GM12878 (cell line): ENCODE measurements at regions of chr12 and their contacts with region 1.

Region 1: GRCh38 chr12:95532851-95533250 is 18.4 kb downstream of the USP44 start:
- DNase-seq: no peak
- ATAC-seq: no peak
- H3K4me3 ChIP-seq: no peak overlapping the region
- H3K27ac ChIP-seq: no peak overlapping the region
- H3K4me1 ChIP-seq: no peaks in the 10 kb centered on the region
- H3K27me3 ChIP-seq: no peaks in the 10 kb centered on the region; a peak in 1 of 4 replicates
- CTCF ChIP-seq: no peak
- EP300 ChIP-seq: no peak
- POLR2A ChIP-seq: no peak
- RAD21 ChIP-seq: no peak

Region 2: GRCh38 chr12:94545935-94546771 is 986.7 kb before region 1 on chr12:
- CTCF ChIA-PET with region 1: interaction called, 8 read pairs
- POLR2A ChIA-PET with region 1: no interaction called
- RAD21 ChIA-PET with region 1: interaction called, 5 read pairs
- SMC1A ChIA-PET with region 1: interaction called, 3 read pairs
- in situ Hi-C with region 1: no loop called
- intact Hi-C with region 1: loop called (anchors 10 kb)
- DNase-seq: peak; percentile 19
- ATAC-seq: peak; percentile 98
- H3K4me3 ChIP-seq: no peak overlapping the region
- H3K27ac ChIP-seq: no peak overlapping the region
- H3K4me1 ChIP-seq: no peaks in the 10 kb centered on the region
- H3K27me3 ChIP-seq: no peaks in the 10 kb centered on the region
- CTCF ChIP-seq: peak; percentile 68 to 75 (median 71)
- EP300 ChIP-seq: no peak
- POLR2A ChIP-seq: no peak
- RAD21 ChIP-seq: peak; percentile 90

Region 3: GRCh38 chr12:95117178-95117599 is 415.7 kb before region 1 on chr12:
- CTCF ChIA-PET with region 1: interaction called, 120 read pairs
- POLR2A ChIA-PET with region 1: no interaction called
- RAD21 ChIA-PET with region 1: interaction called, 64 read pairs
- SMC1A ChIA-PET with region 1: interaction called, 64 read pairs
- in situ Hi-C with region 1: loop called (anchors 5 kb)
- intact Hi-C with region 1: loop called (anchors 1 kb)
- DNase-seq: peak; percentile 38
- ATAC-seq: peak; percentile 97
- H3K4me3 ChIP-seq: no peak overlapping the region
- H3K27ac ChIP-seq: no peak overlapping the region
- H3K4me1 ChIP-seq: peaks cover 4% of the 10 kb centered on the region
- H3K27me3 ChIP-seq: no peaks in the 10 kb centered on the region
- CTCF ChIP-seq: peak; percentile 39 to 73 (median 54); a peak in 5 of 6 replicates
- EP300 ChIP-seq: no peak
- POLR2A ChIP-seq: no peak
- RAD21 ChIP-seq: peak; percentile 76

Region 4: DNA sequence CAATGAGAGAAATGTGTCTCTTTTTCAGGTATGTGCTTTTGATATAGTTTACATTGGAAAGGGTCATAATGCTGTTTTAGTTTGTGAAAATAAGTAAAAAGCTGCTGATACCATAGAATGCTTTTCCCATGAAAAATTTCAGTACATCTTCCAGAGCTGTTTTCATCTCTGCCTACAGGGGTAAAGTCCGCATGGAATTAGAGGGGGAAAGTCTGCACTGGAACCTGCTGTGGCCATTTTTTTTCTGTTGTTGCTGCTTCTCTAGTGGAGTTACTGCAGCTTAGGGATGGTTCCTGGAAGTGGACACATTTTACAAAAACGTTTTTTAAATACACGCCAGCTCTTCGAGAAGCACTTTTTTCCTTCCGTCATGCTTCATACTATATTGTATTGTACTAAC is 233.9 kb before region 1 on chr12:
- CTCF ChIA-PET with region 1: interaction called, 4 read pairs
- POLR2A ChIA-PET with region 1: no interaction called
- RAD21 ChIA-PET with region 1: interaction called, 4 read pairs
- SMC1A ChIA-PET with region 1: interaction called, 3 read pairs
- in situ Hi-C with region 1: no loop called
- intact Hi-C with region 1: loop called (anchors 10 kb)
- DNase-seq: no peak
- ATAC-seq: no peak
- H3K4me3 ChIP-seq: no peak overlapping the region
- H3K27ac ChIP-seq: no peak overlapping the region
- H3K4me1 ChIP-seq: no peaks in the 10 kb centered on the region
- H3K27me3 ChIP-seq: no peaks in the 10 kb centered on the region
- CTCF ChIP-seq: no peak
- EP300 ChIP-seq: no peak
- POLR2A ChIP-seq: no peak
- RAD21 ChIP-seq: no peak

Region 5: DNA sequence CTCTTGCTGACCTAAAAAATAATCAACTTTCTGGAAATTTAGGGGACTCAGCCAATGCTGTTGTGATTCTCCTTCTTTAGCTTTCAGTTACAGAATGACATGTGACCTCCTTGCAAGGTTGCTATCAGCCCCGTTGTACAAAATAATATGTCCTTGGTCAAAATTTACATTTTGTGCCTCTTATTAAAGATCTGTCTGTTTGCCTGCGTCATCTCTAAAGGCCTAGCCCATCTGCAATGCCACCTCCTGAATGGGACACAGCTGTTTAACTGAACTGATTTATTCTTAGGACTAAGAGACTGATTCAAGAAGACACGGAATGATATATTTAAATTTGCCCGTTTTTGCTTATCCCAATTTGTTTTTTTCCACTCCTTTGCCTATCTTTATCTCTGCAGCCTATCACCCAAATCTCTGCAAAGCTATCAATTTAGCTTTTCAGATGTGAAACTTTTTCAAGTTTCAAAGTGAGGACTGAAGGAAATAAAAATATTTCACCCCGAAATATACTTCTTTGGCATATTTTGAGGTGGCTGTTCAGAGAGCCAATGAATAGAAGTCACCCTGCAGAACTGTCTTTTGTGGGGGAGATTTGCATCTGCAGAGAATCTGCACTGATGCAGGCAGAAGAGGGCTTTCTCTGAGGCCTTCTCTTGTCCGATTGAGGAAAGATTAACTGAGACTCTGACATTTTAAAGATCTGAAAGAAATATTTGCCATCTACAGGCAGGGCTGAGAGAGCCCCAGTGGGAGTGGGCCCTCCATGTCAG is 189.2 kb before region 1 on chr12:
- CTCF ChIA-PET with region 1: no interaction called
- POLR2A ChIA-PET with region 1: no interaction called
- RAD21 ChIA-PET with region 1: no interaction called
- SMC1A ChIA-PET with region 1: interaction called, 6 read pairs
- in situ Hi-C with region 1: no loop called
- intact Hi-C with region 1: loop called (anchors 10 kb)
- DNase-seq: no peak
- ATAC-seq: no peak
- H3K4me3 ChIP-seq: no peak overlapping the region
- H3K27ac ChIP-seq: no peak overlapping the region
- H3K4me1 ChIP-seq: no peaks in the 10 kb centered on the region
- H3K27me3 ChIP-seq: no peaks in the 10 kb centered on the region; a peak in 1 of 4 replicates
- CTCF ChIP-seq: no peak
- EP300 ChIP-seq: no peak
- POLR2A ChIP-seq: no peak
- RAD21 ChIP-seq: no peak

Region 6: DNA sequence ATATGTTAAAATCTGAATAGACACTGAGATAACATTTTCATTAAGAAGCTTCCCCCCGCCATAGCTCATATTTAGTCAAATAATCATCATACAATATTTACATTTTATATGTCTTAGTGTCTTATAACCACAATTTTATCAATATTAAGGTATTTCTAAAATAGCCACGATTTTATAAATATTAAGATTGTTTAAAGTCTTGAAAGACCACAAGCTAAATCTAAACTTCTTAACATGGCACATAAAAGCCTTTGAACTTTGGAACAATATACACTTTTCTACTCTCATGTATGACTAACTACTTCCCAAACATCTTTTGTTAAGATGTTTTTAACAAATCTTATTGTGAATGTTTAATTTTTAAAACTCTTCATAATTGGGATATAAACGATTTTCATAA is 11.9 kb after region 1 on chr12:
- CTCF ChIA-PET with region 1: interaction called, 8 read pairs
- POLR2A ChIA-PET with region 1: no interaction called
- RAD21 ChIA-PET with region 1: interaction called, 6 read pairs
- SMC1A ChIA-PET with region 1: interaction called, 10 read pairs
- in situ Hi-C with region 1: no loop called
- intact Hi-C with region 1: no loop called
- DNase-seq: no peak
- ATAC-seq: no peak
- H3K4me3 ChIP-seq: no peak overlapping the region
- H3K27ac ChIP-seq: no peak overlapping the region
- H3K4me1 ChIP-seq: no peaks in the 10 kb centered on the region
- H3K27me3 ChIP-seq: peaks cover 5 to 14% of the 10 kb centered on the region in 2 experiments
- CTCF ChIP-seq: no peak
- EP300 ChIP-seq: no peak
- POLR2A ChIP-seq: no peak
- RAD21 ChIP-seq: no peak

Region 7: DNA sequence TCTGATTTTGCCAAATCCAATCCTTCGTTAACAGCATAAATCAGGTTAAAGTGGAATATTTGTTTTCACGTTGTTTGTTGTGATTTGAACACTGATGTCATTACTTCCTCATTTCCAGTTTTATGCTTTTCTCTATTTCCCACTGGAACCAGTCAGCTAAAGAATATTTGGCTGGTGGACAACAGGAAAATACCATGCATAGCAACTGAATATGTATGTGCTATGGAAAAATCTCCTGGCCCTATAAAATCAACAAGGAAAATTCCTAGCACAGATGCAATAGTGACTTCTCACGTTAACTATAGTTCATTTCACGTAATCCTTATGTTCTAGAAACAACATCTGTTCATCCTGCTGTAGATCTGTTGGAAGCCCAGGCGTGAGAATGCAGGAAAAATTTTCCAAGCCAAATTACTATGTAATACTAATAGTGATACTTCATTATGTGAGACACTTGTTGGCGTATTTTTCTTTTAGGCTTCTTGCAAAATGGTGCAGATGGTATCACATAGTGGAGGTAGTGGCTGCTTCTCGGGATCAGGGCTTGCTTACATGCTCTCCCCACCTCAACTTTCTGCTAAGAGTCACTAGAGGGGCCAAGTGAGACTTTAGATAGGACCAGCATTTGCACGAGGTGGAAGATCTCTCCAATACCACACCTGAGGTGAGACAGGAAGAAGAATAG is 104.8 kb after region 1 on chr12:
- CTCF ChIA-PET with region 1: no interaction called
- POLR2A ChIA-PET with region 1: no interaction called
- RAD21 ChIA-PET with region 1: no interaction called
- SMC1A ChIA-PET with region 1: no interaction called
- in situ Hi-C with region 1: no loop called
- intact Hi-C with region 1: no loop called
- DNase-seq: no peak
- ATAC-seq: no peak
- H3K4me3 ChIP-seq: no peak overlapping the region
- H3K27ac ChIP-seq: no peak overlapping the region
- H3K4me1 ChIP-seq: no peaks in the 10 kb centered on the region
- H3K27me3 ChIP-seq: peaks cover 0 to 3% of the 10 kb centered on the region in 2 experiments; a peak in 3 of 4 replicates
- CTCF ChIP-seq: no peak
- EP300 ChIP-seq: no peak
- POLR2A ChIP-seq: no peak
- RAD21 ChIP-seq: no peak

Region 8: DNA sequence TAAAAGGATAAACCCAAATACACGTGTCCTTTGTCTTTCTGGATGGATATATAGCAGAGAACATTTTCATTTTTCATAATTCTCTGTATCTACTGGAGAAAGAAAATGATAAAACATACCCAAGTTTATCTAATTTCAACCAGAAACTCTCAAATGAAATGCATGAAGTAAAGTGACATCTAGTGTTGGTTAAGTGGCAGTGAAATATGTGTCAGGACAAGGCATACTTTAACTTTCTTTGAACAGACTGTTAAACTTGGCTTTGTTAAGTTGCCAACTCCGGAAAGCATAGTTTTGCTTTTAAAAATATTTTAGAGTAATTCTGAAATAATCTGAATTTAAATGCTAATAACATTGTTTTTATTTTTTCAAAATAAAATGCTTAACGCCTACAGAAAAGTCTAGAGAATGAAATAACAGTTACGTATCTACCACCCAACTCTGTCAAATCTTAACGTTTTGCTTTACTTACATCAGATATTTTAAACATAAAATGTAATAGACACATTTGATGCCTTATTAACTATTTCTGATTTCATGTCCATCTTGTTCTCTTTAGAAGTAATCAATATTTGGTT is 282.9 kb after region 1 on chr12:
- CTCF ChIA-PET with region 1: interaction called, 3 read pairs
- POLR2A ChIA-PET with region 1: no interaction called
- RAD21 ChIA-PET with region 1: interaction called, 3 read pairs
- SMC1A ChIA-PET with region 1: no interaction called
- in situ Hi-C with region 1: no loop called
- intact Hi-C with region 1: loop called (anchors 5 kb)
- DNase-seq: no peak
- ATAC-seq: peak; percentile 56
- H3K4me3 ChIP-seq: no peak overlapping the region
- H3K27ac ChIP-seq: no peak overlapping the region
- H3K4me1 ChIP-seq: no peaks in the 10 kb centered on the region
- H3K27me3 ChIP-seq: peaks cover 0 to 2% of the 10 kb centered on the region in 2 experiments; a peak in 3 of 4 replicates
- CTCF ChIP-seq: peak; percentile 44 to 63 (median 59); a peak in 5 of 6 replicates
- EP300 ChIP-seq: no peak
- POLR2A ChIP-seq: no peak
- RAD21 ChIP-seq: peak; percentile 83